ENCODE measurements at regions of chr1 and their contacts with region 1.

Region 1: GRCh38 chr1:172041742-172042141 is 200.4 kb downstream of the DNM3 start:
- DNase-seq: peak; percentile 45
- H3K4me3 ChIP-seq: no peak overlapping the region
- H3K27ac ChIP-seq: no peak overlapping the region
- H3K4me1 ChIP-seq: peaks cover 14% of the 10 kb centered on the region
- H3K27me3 ChIP-seq: no peaks in the 10 kb centered on the region
- CTCF ChIP-seq: peak; percentile 7 to 12
- POLR2A ChIP-seq: no peak

Region 2: DNA sequence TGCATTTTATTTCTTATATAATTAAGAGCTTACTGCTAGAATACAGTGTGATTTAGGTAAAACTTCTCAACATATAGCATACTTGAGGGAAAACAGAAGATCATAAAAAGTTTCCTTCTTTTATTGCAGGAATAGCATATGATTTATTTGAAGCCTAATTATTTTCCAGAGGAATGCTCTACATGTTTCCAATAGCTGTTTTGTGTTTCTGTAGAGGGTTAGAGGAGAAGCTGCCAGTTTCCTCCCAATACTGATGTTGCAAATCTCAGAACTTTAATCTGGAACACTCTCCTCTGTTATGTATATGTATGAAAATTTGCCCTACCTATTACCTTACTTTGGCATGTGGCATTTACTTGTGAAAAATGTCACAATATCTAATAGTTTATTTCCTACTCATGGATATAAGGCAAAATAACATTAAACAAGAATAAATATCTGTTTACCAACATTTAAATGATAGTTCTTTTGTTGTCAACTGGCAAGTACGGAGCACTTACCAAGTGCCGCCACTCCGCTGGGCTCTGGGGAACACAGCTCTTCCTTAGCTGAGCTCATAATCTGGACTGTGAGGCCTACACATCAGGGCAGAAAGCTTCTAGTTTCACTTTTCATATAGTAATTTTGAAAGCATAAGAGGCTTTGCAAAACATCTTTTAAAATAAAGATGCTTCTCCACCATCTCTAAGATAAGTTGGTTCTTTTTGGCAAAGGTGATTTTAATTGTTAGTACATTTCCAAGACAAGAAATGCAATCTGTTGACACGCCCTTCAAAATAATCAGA is 139.0 kb after region 1 on chr1:
- CTCF ChIA-PET with region 1: no interaction called
- POLR2A ChIA-PET with region 1: no interaction called
- dilution Hi-C with region 1: no loop called
- intact Hi-C with region 1: loop called (anchors 5 kb)
- DNase-seq: peak; percentile 75
- H3K4me3 ChIP-seq: peak overlapping the region in 1 of 3 experiments; percentile 58
- H3K27ac ChIP-seq: peak overlapping the region; percentile 46
- H3K4me1 ChIP-seq: peaks cover 11% of the 10 kb centered on the region
- H3K27me3 ChIP-seq: no peaks in the 10 kb centered on the region
- CTCF ChIP-seq: no peak
- POLR2A ChIP-seq: no peak

Region 3: DNA sequence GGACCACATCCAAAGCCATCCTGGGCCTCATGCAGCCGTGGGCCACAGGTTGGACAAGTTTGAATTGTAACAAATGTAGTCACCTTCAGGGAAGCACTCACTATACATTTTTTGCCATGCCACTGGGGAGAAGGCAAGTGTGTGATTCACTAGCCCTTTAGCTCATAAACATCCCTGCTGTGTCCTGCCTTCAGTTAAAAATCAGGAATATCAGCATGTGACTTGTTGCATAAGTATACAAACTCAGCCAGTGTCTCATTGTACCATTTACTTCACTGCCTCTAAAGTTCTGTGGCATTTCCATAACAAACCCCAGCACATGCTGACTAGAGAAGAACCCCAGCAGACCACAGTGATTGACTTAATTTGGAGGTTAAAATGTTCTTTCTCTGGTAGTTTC is 236.7 kb after region 1 on chr1:
- CTCF ChIA-PET with region 1: no interaction called
- POLR2A ChIA-PET with region 1: no interaction called
- dilution Hi-C with region 1: no loop called
- intact Hi-C with region 1: no loop called
- DNase-seq: no peak
- H3K4me3 ChIP-seq: no peak overlapping the region
- H3K27ac ChIP-seq: no peak overlapping the region
- H3K4me1 ChIP-seq: no peaks in the 10 kb centered on the region
- H3K27me3 ChIP-seq: no peaks in the 10 kb centered on the region
- CTCF ChIP-seq: no peak
- POLR2A ChIP-seq: no peak

Region 4: GRCh38 chr1:172343240-172344160 is 301.8 kb after region 1 on chr1:
- CTCF ChIA-PET with region 1: no interaction called
- POLR2A ChIA-PET with region 1: no interaction called
- dilution Hi-C with region 1: no loop called
- intact Hi-C with region 1: loop called (anchors 1 kb)
- DNase-seq: peak; percentile 86
- H3K4me3 ChIP-seq: peak overlapping the region in 1 of 3 experiments; percentile 32
- H3K27ac ChIP-seq: peak overlapping the region; percentile 99
- H3K4me1 ChIP-seq: peaks cover 26% of the 10 kb centered on the region
- H3K27me3 ChIP-seq: no peaks in the 10 kb centered on the region
- CTCF ChIP-seq: no peak
- POLR2A ChIP-seq: no peak

Region 5: DNA sequence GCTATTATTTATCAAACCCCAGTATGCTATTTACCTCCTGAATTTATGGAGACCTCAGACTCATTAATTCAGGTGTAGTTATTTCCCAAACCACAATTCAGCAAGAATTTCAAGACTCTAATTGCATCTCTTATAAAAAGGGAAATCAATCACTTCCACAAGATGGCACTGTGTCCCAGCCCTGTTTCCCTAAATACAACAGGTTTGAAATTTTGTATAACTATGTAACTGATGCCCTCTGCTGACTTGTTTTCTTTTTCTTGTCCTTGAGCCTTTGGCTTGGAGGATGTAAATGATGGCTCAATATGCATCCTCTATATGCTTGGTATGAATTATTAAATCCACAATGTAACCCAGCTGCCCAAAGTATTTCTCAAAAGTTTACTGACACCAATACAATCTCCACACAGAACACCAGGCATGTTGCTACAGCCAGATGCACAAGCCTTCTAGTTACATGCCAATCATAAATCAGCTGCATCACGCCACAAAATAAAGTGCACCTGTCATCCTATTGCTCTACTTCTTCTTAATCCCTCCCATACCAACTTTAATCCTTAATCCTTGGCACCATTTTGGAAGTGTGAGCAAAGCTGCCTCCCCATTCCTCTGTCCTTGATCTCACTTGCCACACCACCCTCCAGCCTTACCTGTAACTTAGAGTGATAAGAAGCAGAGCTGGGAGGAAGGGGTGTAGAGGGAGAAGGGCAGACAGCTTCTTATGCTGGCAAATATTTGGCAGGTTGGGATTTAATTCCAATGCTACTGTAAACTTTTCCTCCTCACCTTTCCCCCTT is 387.8 kb after region 1 on chr1:
- CTCF ChIA-PET with region 1: interaction called, 3 read pairs
- POLR2A ChIA-PET with region 1: no interaction called
- dilution Hi-C with region 1: no loop called
- intact Hi-C with region 1: loop called (anchors 5 kb)
- DNase-seq: peak; percentile 78
- H3K4me3 ChIP-seq: no peak overlapping the region
- H3K27ac ChIP-seq: no peak overlapping the region
- H3K4me1 ChIP-seq: no peaks in the 10 kb centered on the region
- H3K27me3 ChIP-seq: no peaks in the 10 kb centered on the region
- CTCF ChIP-seq: peak; percentile 47 to 64
- POLR2A ChIP-seq: no peak

Region 6: DNA sequence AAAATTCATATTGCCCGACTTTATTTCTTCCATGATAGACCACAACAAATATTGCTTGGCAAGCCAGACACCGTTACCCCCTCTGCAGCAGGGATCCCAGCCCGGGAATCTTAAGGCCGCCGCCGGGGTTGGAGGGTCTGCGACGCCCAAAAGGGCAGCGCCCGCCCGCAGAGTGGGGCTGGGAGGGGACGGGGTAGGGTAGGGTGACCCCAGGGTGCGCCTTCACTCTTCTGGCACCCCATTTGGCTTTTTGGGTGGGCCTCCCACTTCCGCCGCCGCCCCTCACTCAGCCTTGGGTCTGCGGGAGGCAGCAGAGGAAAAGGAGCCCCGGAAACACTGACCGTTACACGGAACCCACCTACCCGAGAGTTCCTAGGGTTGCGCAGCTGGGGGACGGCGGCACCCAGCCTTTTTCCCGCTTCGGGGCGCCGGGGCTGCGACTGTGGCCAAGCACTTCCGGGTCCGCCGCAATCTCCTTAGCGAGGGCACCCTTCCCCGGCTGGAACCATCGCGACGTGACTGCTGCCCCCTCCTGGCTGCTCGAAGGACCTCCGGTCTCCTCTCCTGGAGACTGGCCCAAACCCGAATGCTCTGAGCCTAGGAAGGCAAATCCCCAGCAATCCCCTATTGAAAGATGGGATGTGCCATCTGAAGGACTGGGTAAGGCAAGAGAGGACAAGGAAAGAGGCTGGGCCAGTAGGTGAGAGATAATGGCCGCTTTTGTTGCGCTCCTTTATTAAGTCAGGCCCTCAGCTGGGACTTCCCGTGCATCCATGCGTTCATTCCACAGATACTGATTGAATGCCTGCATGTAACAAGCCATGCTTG is 402.1 kb after region 1 on chr1 and contains the start of gene PIGC:
- CTCF ChIA-PET with region 1: interaction called, 3 read pairs
- POLR2A ChIA-PET with region 1: no interaction called
- dilution Hi-C with region 1: no loop called
- intact Hi-C with region 1: loop called (anchors 1 kb)
- DNase-seq: peak; percentile 83
- H3K4me3 ChIP-seq: peak within 1 kb of the TSS; percentile 68 to 92 (median 83)
- H3K27ac ChIP-seq: peak within 1 kb of the TSS; percentile 76
- H3K4me1 ChIP-seq: peaks cover 16% of the 10 kb centered on the region
- H3K27me3 ChIP-seq: no peaks in the 10 kb centered on the region
- CTCF ChIP-seq: peak; percentile 90 to 93
- POLR2A ChIP-seq: peak; percentile 63
- total RNA-seq, gene PIGC: 15.9 and 16.1 TPM in 2 replicates